Aorta (tissue), 5 donors: ENCODE measurements at regions of chr5 and their contacts with region 1.

Region 1: DNA sequence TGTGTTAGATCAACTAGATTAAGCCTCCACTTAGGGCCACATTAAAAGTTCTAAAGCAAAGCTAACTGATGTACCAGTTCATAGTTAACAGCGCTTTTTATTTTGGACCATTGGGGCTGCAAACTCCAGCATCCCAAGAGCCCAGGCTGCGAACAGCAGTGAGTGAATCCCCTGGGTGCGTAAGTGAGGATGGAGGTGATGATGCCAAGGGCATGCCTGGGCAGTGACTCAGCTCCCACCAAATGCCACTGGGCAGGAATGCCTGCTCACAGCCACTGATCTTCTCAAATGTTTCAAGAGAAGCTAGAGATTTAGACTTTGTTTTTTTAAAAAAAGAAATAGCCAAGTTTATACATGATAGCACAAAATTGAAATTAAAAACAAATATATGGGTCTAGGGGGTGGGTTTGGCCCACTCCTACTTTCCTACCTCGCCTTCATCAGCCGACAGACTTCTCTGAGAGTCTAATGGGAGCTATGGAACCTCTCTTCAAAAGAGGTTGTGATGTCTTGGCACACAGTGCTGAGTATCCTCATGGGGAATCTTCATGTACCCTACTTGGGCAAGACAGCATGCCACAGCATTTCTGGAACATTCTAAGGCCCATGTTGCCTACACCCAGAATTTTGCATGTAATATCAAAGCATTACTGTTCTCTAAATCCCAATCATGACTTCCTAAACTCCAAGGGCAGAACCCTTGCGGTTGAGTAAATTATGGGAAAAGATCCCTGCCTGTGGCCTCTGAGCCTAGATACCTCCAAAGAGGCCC is 398.1 kb downstream of the EBF1 start:
- DNase-seq: peak; percentile 82 to 88
- ATAC-seq: peak; percentile 82
- H3K4me3 ChIP-seq: no peak overlapping the region
- H3K27ac ChIP-seq: peak overlapping the region in 1 of 2 donors; percentile 98
- H3K4me1 ChIP-seq: peaks cover 6 to 11% of the 10 kb centered on the region in 2 donors
- H3K27me3 ChIP-seq: no peaks in the 10 kb centered on the region

Region 2: GRCh38 chr5:158246661-158247060 is 454.9 kb before region 1 on chr5:
- intact Hi-C with region 1: no loop called
- DNase-seq: no peak
- ATAC-seq: no peak
- H3K4me3 ChIP-seq: no peak overlapping the region
- H3K27ac ChIP-seq: no peak overlapping the region
- H3K4me1 ChIP-seq: no peaks in the 10 kb centered on the region
- H3K27me3 ChIP-seq: no peaks in the 10 kb centered on the region

Region 3: GRCh38 chr5:158502686-158503085 is 198.9 kb before region 1 on chr5:
- intact Hi-C with region 1: no loop called
- DNase-seq: peak in 1 of 2 donors; percentile 46
- ATAC-seq: no peak
- H3K4me3 ChIP-seq: no peak overlapping the region
- H3K27ac ChIP-seq: no peak overlapping the region
- H3K4me1 ChIP-seq: no peaks in the 10 kb centered on the region
- H3K27me3 ChIP-seq: no peaks in the 10 kb centered on the region

Region 4: GRCh38 chr5:158720281-158720680 is 18.7 kb after region 1 on chr5:
- intact Hi-C with region 1: loop called in 1 of 2 experiments (anchors 2 kb)
- DNase-seq: no peak
- ATAC-seq: no peak
- H3K4me3 ChIP-seq: no peak overlapping the region
- H3K27ac ChIP-seq: peak overlapping the region in 1 of 2 donors; percentile 57
- H3K4me1 ChIP-seq: peaks cover 12 to 25% of the 10 kb centered on the region in 2 donors
- H3K27me3 ChIP-seq: no peaks in the 10 kb centered on the region

Region 5: GRCh38 chr5:158751961-158752655 is 50.5 kb after region 1 on chr5:
- intact Hi-C with region 1: loop called in 1 of 2 experiments (anchors 10 kb)
- DNase-seq: no peak
- ATAC-seq: no peak
- H3K4me3 ChIP-seq: no peak overlapping the region
- H3K27ac ChIP-seq: no peak overlapping the region
- H3K4me1 ChIP-seq: peaks cover 13 to 16% of the 10 kb centered on the region in 2 donors
- H3K27me3 ChIP-seq: no peaks in the 10 kb centered on the region

Region 6: GRCh38 chr5:158796812-158797497 is 95.4 kb after region 1 on chr5:
- intact Hi-C with region 1: loop called in 1 of 2 experiments (anchors 5 kb)
- DNase-seq: no peak
- ATAC-seq: peak; percentile 70
- H3K4me3 ChIP-seq: no peak overlapping the region
- H3K27ac ChIP-seq: peak overlapping the region in 1 of 2 donors; percentile 67
- H3K4me1 ChIP-seq: peaks cover 0 to 24% of the 10 kb centered on the region in 2 donors
- H3K27me3 ChIP-seq: no peaks in the 10 kb centered on the region

Region 7: DNA sequence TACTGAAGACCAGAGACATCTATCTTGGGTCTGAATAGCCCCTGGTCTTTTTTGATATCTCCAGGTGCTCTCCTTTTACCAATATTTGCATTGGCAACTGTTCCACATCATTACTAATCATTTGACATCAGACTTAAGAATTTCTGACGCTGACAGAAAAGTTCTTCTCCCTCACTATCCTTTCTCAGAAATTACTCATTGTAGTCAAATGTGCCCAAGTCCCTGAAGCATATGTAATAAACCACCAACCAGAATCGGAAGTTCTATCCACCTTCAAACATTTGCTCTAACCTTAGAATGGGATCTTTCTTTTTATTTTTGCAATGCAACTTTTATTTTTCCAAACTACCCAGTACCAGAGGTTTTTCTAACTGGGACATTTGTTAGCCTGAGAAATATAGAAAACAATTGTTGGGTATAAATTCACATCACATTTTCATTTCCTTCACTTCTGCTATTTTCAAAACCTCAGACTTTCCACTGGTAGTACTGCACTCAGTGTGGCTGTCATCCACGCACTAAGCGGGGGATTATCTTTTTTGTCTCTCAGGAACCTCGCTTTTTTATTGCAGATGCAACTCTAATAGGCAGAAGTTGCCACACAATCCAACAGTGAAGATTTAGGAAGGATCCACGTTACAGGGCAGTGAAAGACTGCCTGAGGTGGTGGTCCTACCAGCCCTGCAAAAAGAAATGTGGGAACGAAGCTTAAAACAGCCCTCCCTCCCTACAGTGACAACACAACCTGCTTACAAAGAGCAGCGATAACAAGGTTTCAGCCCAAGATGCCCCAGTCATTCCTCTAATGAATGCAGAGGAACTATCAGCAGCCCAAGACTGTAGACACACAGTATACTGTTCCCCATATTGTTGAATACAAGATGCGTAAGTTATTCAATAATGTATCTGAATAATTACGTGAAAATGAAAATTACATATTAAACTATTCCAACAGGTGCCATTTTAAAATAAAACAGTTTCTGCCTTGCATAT is 196.9 kb after region 1 on chr5:
- intact Hi-C with region 1: loop called in 1 of 2 experiments (anchors 10 kb)
- DNase-seq: no peak
- ATAC-seq: no peak
- H3K4me3 ChIP-seq: no peak overlapping the region
- H3K27ac ChIP-seq: no peak overlapping the region
- H3K4me1 ChIP-seq: no peaks in the 10 kb centered on the region
- H3K27me3 ChIP-seq: no peaks in the 10 kb centered on the region

Region 8: GRCh38 chr5:158958021-158958994 is 256.7 kb after region 1 on chr5:
- intact Hi-C with region 1: no loop called
- DNase-seq: no peak
- ATAC-seq: peak; percentile 31
- H3K4me3 ChIP-seq: no peak overlapping the region
- H3K27ac ChIP-seq: no peak overlapping the region
- H3K4me1 ChIP-seq: peaks cover 3 to 10% of the 10 kb centered on the region in 2 donors
- H3K27me3 ChIP-seq: no peaks in the 10 kb centered on the region

Region 9: GRCh38 chr5:159100025-159100781 is 398.6 kb after region 1 on chr5:
- intact Hi-C with region 1: loop called in 1 of 2 experiments (anchors 2 kb)
- DNase-seq: peak; percentile 95 to 97
- ATAC-seq: peak; percentile 94
- H3K4me3 ChIP-seq: peak overlapping the region; percentile 55 to 94
- H3K27ac ChIP-seq: peak overlapping the region; percentile 17 to 80
- H3K4me1 ChIP-seq: no peaks in the 10 kb centered on the region
- H3K27me3 ChIP-seq: no peaks in the 10 kb centered on the region